ENCODE measurements at regions of chr9 and their contacts with region 1.

Region 1: DNA sequence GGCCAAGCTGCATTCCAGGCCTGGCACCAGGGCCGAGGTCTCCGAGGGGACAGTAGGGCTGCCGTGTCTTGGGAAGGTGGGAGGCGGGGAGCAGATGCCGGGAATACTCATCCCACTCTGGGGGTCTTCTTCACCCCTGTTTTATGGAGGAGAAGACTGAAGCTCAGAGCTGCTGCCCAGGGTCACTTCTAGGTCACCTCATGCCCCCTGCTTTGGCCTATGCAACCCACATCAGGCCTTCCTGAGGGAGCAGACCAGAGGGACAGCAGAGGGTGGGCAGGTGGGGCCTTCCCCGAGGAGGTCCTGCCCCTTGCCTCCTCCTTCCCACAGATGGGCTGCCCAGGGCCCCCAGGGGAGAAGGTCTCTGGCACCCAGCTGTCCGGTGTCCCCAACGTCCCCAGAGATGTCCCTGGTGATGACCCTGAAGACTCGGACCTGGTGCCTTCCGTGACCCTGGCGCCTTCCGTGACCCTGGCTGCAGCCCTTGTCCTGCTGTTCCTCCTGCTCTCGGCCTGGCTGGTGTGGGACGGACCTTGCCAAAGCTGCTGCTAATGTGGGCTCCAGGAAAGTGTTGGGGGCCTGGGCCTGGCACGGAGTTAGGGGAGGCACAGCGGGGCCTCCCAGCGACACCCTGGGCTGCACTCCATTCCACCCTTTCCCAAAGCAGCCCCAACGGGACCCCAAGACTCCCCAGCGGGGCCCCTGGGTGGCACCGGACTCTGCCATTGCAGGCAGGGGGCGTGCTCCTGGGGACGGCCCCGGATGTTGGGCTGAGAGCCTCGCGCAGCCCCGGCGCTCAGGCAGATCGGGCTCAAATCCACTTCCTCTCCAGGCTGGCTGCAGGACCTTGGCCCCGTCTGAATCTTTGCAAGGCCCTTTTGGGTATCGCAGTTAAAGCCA is 6.7 kb upstream of the SLC2A6 start:
- DNase-seq: no peak
- H3K4me3 ChIP-seq: no peak overlapping the region
- H3K27ac ChIP-seq: no peak overlapping the region
- H3K4me1 ChIP-seq: peaks cover 0 to 10% (median 0%) of the 10 kb centered on the region in 4 donors
- H3K27me3 ChIP-seq: peaks cover 0 to 34% of the 10 kb centered on the region in 2 donors
- CTCF ChIP-seq: no peak

Region 2: DNA sequence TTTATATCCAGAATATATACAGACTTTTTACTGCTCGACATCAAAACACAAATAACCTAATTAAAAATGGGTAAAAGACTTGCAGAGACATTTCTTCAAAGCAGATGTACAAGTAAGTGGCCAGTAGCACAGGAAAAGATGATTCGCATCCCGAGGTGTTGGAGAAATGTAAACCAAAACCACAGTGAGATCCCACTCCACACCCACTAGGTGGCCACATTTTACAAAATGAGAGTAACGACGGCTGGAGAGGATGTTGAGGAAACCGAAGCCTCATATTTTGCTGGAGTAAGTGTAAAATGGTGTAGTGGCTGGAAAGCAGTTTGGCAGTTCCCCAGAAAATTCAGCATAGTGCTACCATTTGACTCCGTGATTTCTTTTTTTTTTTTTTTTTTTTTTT is 300.6 kb before region 1 on chr9:
- intact Hi-C with region 1: loop called (anchors 2 kb)
- DNase-seq: no peak
- H3K4me3 ChIP-seq: no peak overlapping the region
- H3K27ac ChIP-seq: no peak overlapping the region
- H3K4me1 ChIP-seq: peaks cover 0 to 3% (median 0%) of the 10 kb centered on the region in 4 donors
- H3K27me3 ChIP-seq: peaks cover 0 to 23% of the 10 kb centered on the region in 2 donors
- CTCF ChIP-seq: peak; percentile 45 to 53

Region 3: DNA sequence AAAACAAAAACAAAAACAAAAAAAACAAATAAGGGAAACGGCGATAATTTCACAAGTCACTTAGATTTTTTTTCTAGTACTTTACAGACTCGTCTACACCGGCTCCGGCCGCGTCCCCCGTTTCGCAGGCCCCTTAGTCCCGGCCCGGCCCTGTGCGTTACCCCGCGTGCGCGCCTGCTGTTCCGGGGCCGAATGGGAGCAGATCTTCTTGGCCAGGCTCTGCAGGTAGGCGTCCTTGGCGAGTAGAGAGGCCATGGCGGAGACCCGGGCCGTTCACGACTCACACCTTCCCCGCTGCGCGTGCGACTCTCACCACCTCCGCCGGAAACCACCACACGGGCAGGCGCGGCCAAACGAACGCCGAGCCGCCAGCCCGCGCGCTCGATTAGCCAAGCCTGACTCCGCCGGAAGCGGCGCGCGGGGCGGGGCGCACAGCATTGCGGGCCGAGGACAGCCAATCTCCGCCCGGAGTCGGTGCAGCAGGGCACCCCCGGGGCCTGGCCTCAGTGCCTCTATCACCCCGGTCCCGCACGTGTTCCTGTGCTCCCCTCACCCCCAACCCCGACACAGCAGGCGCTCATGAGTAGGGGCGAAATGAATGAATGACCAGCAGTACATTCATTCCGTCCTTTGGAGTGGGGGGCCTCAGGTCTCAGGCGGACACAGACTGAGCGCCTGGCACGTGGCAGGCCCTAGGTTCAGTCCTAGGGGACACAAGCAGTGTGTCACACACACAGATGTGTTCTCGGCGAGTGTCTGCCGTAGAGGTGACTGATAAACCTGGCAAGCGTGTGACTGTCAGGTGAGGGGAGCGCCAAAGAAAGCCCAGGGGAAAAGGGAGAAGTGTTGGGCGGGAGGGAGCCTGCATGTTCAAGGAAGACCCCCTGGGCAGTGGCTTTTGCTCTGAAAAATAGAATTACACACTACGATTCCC is 149.5 kb before region 1 on chr9 and contains the start of gene SURF6:
- intact Hi-C with region 1: loop called (anchors 10 kb)
- DNase-seq: peak; percentile 85 to 93
- H3K4me3 ChIP-seq: peak within 1 kb of the TSS; percentile 87 to 95
- H3K27ac ChIP-seq: peak within 1 kb of the TSS; percentile 71 to 73
- H3K4me1 ChIP-seq: peaks cover 0 to 32% (median 24%) of the 10 kb centered on the region in 4 donors
- H3K27me3 ChIP-seq: no peaks in the 10 kb centered on the region
- CTCF ChIP-seq: no peak

Region 4: DNA sequence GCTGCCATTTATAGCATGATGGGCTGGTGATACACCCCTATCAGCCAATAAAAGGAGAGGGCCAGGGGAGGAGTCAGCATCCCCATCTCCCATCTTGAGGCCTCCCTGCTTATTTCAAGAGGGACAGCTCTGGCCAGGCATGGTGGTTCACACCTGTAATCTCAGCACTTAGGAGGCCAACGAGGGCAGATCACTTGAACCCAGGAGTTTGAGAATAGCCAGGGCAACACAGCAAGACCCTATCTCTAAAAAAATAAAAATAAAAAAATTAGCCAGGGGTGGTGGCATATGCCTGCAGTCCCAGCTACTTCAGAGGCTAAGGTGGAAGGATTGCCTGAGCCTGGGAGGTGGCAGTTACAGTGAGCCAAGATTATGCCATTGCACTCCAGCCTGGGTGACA is 77.6 kb before region 1 on chr9:
- intact Hi-C with region 1: loop called (anchors 1 kb)
- DNase-seq: no peak
- H3K4me3 ChIP-seq: no peak overlapping the region
- H3K27ac ChIP-seq: no peak overlapping the region
- H3K4me1 ChIP-seq: no peaks in the 10 kb centered on the region
- H3K27me3 ChIP-seq: no peaks in the 10 kb centered on the region
- CTCF ChIP-seq: no peak

Region 5: DNA sequence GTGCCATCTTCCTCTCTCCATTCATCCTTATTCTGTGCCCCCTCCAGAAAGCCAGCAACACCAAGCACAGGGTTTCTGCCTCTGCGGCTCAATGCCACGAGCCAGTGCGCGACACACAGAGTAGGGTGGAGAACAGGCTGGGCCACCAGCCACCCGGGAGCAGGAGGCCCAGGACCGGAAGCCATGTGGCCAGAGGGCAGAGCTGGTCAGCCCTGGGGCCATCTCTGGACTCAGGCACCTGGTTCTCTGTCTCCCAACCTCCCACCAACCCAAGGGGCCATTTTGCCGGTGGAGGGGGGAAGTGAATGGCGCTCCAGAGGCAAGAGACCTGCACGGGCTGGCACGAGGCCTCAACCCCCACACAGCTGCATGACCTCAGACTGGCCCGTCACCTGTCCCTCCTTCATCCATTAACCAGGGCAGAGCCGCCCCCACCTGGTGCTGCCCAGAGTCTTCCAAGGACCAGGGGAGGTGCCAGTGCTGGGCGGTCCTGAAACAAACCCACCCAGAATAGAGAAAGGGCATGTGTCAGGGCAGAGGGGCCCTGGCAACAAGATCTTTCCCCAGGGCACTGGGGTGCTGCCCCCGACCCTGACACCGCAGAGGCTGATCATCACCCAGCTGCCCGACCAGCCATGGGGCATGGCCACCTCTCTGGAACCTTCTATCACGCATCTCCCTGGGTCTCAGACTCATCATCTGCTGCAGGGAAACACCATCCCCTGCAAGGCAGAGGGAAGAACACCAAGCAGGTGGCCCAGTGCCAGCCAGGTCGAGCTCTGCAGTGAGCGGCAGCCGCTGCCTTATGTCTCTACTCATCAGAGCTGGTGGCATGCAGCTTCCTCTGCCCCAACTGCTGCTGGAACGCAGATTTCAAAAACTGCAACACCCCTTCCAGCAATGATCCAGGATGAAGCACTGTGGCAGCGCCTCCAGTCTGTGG is 494.6 kb after region 1 on chr9:
- intact Hi-C with region 1: no loop called
- DNase-seq: no peak
- H3K4me3 ChIP-seq: peak overlapping the region in 1 of 2 donors; percentile 40
- H3K27ac ChIP-seq: no peak overlapping the region
- H3K4me1 ChIP-seq: peaks cover 0 to 21% (median 14%) of the 10 kb centered on the region in 4 donors
- H3K27me3 ChIP-seq: no peaks in the 10 kb centered on the region
- CTCF ChIP-seq: no peak